ENCODE measurements at regions of chr5 and their contacts with region 1.

Region 1: GRCh38 chr5:81194633-81195333 is 38.3 kb upstream of the CKMT2 start:
- DNase-seq: peak; percentile 66 to 86 (median 76)
- ATAC-seq: peak; percentile 99
- H3K4me3 ChIP-seq: no peak overlapping the region
- H3K4me3 Mint-ChIP-seq: no peak overlapping the region
- H3K27ac ChIP-seq: no peak overlapping the region
- H3K27ac Mint-ChIP-seq: peak overlapping the region; percentile 60
- H3K4me1 ChIP-seq: peaks cover 8% of the 10 kb centered on the region
- H3K4me1 Mint-ChIP-seq: peaks cover 10% of the 10 kb centered on the region
- H3K27me3 ChIP-seq: no peaks in the 10 kb centered on the region
- H3K27me3 Mint-ChIP-seq: no peaks in the 10 kb centered on the region
- CTCF ChIP-seq: peak; percentile 94

Region 2: DNA sequence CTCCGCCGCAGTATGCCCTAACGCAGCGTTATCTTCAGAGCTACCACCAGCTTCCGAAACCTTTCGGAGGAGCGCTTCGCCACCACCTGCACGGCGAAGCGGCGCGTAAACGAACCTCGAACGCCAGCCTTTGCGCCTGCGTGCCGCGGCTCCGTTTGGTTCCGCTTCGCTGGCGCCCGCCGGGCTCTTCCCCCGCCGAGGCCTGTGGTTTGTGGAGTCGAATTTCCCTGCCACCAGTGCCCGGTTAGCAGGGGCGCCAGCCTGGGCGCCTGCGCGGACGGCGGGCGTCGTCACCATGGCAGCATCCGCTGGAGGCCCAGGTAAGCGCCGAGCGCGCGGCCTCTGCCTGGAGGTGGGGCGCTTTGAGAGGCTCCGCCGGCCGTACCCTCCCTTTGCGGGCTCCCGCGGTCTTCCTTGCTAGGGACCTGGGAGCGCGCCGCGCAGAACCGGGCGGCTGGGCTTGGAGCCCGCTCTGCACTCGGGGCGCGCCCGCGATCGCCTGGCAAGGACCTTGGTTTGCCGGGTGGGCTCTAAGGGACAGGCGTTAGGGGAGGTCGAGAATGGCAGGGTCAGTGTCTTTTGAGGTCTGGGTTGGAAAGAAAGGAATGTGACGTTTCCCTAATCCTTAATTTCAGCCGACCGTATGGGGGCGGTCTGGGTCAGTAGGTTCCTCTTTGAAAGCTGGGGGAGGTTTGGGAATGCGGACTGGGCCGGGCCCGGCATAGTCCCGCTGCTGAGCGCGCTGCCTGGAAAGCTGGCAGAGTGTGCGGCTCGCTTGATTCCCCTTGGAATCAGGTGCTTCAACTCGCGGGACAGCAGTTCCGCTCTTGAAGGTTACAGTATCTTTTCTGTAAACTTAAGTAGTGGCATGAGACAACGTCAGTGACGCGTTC is 706.7 kb before region 1 on chr5 and contains the start of gene FAM151B:
- CTCF ChIA-PET with region 1: no interaction called
- POLR2A ChIA-PET with region 1: no interaction called
- intact Hi-C with region 1: loop called in 1 of 2 experiments (anchors 10 kb)
- DNase-seq: peak; percentile 45 to 91 (median 74)
- ATAC-seq: peak; percentile 88
- H3K4me3 ChIP-seq: peak within 1 kb of the TSS; percentile 58
- H3K4me3 Mint-ChIP-seq: peak within 1 kb of the TSS; percentile 88
- H3K27ac ChIP-seq: no peak within 1 kb of the TSS
- H3K27ac Mint-ChIP-seq: peak within 1 kb of the TSS; percentile 87
- H3K4me1 ChIP-seq: peaks cover 16% of the 10 kb centered on the region
- H3K4me1 Mint-ChIP-seq: peaks cover 21% of the 10 kb centered on the region
- H3K27me3 ChIP-seq: no peaks in the 10 kb centered on the region
- H3K27me3 Mint-ChIP-seq: no peaks in the 10 kb centered on the region
- CTCF ChIP-seq: no peak
- total RNA-seq, gene FAM151B: 0.33 to 0.61 TPM

Region 3: GRCh38 chr5:80686757-80687156 is 508.0 kb before region 1 on chr5:
- CTCF ChIA-PET with region 1: interaction called, 4 read pairs
- POLR2A ChIA-PET with region 1: interaction called, 3 read pairs
- intact Hi-C with region 1: loop called (anchors 1 kb)
- DNase-seq: peak in 3 of 14 experiments; percentile 29 to 52 (median 32)
- ATAC-seq: no peak
- H3K4me3 ChIP-seq: no peak overlapping the region
- H3K4me3 Mint-ChIP-seq: no peak overlapping the region
- H3K27ac ChIP-seq: no peak overlapping the region
- H3K27ac Mint-ChIP-seq: no peak overlapping the region
- H3K4me1 ChIP-seq: no peaks in the 10 kb centered on the region
- H3K4me1 Mint-ChIP-seq: peaks cover 22% of the 10 kb centered on the region
- H3K27me3 ChIP-seq: no peaks in the 10 kb centered on the region
- H3K27me3 Mint-ChIP-seq: no peaks in the 10 kb centered on the region
- CTCF ChIP-seq: peak; percentile 27

Region 4: DNA sequence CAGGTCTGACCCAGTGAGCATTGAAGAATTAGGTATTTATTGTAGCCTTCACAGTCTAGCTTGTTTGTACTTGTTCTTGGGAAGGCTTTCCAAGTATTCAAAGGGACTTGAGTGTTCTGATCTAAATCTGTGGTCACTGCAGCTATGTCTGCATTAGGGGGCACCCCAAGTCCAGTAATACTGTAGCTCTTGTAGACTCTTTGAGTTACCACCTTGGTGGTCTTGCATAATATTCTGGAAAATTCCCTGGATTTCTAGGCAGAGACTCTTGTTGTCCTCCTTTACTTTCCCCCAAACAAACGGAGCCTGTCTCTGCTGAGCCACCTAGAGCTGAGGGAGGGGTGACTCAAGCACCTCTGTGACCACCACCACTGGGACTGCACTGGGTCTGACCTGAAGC is 390.5 kb before region 1 on chr5:
- CTCF ChIA-PET with region 1: no interaction called
- POLR2A ChIA-PET with region 1: no interaction called
- intact Hi-C with region 1: loop called in 1 of 2 experiments (anchors 10 kb)
- DNase-seq: peak in 1 of 14 experiments; percentile 5
- ATAC-seq: no peak
- H3K4me3 ChIP-seq: no peak overlapping the region
- H3K4me3 Mint-ChIP-seq: no peak overlapping the region
- H3K27ac ChIP-seq: no peak overlapping the region
- H3K27ac Mint-ChIP-seq: no peak overlapping the region
- H3K4me1 ChIP-seq: no peaks in the 10 kb centered on the region
- H3K4me1 Mint-ChIP-seq: no peaks in the 10 kb centered on the region
- H3K27me3 ChIP-seq: no peaks in the 10 kb centered on the region
- H3K27me3 Mint-ChIP-seq: no peaks in the 10 kb centered on the region
- CTCF ChIP-seq: no peak

Region 5: DNA sequence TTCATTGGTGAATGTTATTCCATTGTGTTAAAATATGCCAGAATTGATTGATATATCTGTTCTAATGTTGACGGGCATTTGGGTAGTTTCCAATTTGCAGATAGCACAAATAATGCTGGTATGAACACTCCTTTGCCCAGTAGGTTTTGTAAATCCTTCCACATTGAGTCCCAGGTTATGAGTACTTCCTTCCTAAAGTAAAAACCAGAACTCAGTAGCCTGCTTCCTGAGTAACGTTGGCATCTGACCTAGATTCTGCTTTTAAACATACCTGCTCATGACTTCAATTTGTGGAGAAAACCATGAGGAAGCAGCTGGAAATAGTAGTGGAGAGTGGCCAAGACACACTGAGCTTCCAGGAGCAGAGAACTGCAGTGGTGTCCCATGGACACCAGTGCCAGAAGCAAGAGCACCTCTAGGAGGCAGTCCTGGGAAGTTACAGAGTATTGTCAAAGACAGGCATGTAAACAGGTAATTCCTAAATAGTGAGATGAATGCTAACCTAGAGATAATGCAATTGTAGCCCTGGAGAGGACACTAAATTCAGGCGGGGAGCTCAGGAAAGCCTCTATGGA is 258.9 kb before region 1 on chr5:
- CTCF ChIA-PET with region 1: no interaction called
- POLR2A ChIA-PET with region 1: no interaction called
- intact Hi-C with region 1: loop called in 1 of 2 experiments (anchors 10 kb)
- DNase-seq: peak in 3 of 14 experiments; percentile 14 to 26 (median 17)
- ATAC-seq: no peak
- H3K4me3 ChIP-seq: no peak overlapping the region
- H3K4me3 Mint-ChIP-seq: no peak overlapping the region
- H3K27ac ChIP-seq: no peak overlapping the region
- H3K27ac Mint-ChIP-seq: no peak overlapping the region
- H3K4me1 ChIP-seq: peaks cover 4% of the 10 kb centered on the region
- H3K4me1 Mint-ChIP-seq: peaks cover 8% of the 10 kb centered on the region
- H3K27me3 ChIP-seq: no peaks in the 10 kb centered on the region
- H3K27me3 Mint-ChIP-seq: no peaks in the 10 kb centered on the region
- CTCF ChIP-seq: peak; percentile 11

Region 6: GRCh38 chr5:81068063-81068462 is 126.7 kb before region 1 on chr5:
- CTCF ChIA-PET with region 1: no interaction called
- POLR2A ChIA-PET with region 1: no interaction called
- intact Hi-C with region 1: no loop called
- DNase-seq: no peak
- ATAC-seq: no peak
- H3K4me3 ChIP-seq: no peak overlapping the region
- H3K4me3 Mint-ChIP-seq: no peak overlapping the region
- H3K27ac ChIP-seq: no peak overlapping the region
- H3K27ac Mint-ChIP-seq: no peak overlapping the region
- H3K4me1 ChIP-seq: no peaks in the 10 kb centered on the region
- H3K4me1 Mint-ChIP-seq: peaks cover 20% of the 10 kb centered on the region
- H3K27me3 ChIP-seq: no peaks in the 10 kb centered on the region
- H3K27me3 Mint-ChIP-seq: no peaks in the 10 kb centered on the region
- CTCF ChIP-seq: no peak

Region 7: DNA sequence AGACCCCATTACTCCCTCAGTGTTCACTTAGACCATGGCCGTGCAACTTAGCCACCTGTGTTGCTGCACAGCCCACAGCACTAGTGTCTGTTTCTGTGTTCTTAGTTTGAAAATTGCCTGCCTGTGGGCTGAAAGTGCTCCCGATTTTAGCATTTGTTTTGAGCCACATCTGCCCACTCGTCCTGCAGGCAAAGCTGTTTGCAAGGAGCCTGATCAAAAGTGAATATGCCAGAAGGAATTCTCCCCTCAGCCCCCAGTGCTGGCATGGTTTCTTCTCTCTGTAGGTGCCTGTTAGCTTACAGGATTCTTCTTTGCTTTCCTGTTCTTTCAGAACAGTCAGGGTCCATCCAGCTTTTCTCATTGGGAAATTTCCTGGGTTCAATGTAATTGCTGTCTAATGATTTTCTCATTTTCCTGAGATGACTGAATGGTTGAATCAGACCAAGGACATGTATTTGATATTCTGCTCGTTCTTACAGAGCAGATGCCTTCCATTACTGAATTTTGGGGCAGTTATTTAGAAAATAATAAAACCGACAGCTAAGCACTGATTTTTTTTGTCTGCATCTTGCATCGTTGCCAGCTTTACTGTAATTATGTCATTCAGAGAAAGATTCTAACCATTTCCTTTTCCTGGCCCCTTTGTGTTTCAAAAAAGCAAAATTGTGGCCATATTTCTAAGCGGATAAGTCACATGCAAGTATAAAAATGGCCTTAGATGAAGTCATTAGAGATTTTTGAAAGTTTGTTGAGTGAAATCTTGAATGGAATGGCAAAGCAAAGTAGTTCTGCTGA is 72.8 kb before region 1 on chr5:
- CTCF ChIA-PET with region 1: no interaction called
- POLR2A ChIA-PET with region 1: no interaction called
- intact Hi-C with region 1: no loop called
- DNase-seq: no peak
- ATAC-seq: no peak
- H3K4me3 ChIP-seq: no peak overlapping the region
- H3K4me3 Mint-ChIP-seq: no peak overlapping the region
- H3K27ac ChIP-seq: no peak overlapping the region
- H3K27ac Mint-ChIP-seq: no peak overlapping the region
- H3K4me1 ChIP-seq: no peaks in the 10 kb centered on the region
- H3K4me1 Mint-ChIP-seq: peaks cover 27% of the 10 kb centered on the region
- H3K27me3 ChIP-seq: no peaks in the 10 kb centered on the region
- H3K27me3 Mint-ChIP-seq: no peaks in the 10 kb centered on the region
- CTCF ChIP-seq: no peak

Region 8: GRCh38 chr5:81495286-81495685 is 300.5 kb after region 1 on chr5:
- CTCF ChIA-PET with region 1: no interaction called
- POLR2A ChIA-PET with region 1: no interaction called
- intact Hi-C with region 1: no loop called
- DNase-seq: no peak
- ATAC-seq: no peak
- H3K4me3 ChIP-seq: no peak overlapping the region
- H3K4me3 Mint-ChIP-seq: no peak overlapping the region
- H3K27ac ChIP-seq: no peak overlapping the region
- H3K27ac Mint-ChIP-seq: no peak overlapping the region
- H3K4me1 ChIP-seq: no peaks in the 10 kb centered on the region
- H3K4me1 Mint-ChIP-seq: no peaks in the 10 kb centered on the region
- H3K27me3 ChIP-seq: no peaks in the 10 kb centered on the region
- H3K27me3 Mint-ChIP-seq: no peaks in the 10 kb centered on the region
- CTCF ChIP-seq: no peak

Measured in CD4-positive, alpha-beta T cell (primary cell).